T-cell (primary cell): ENCODE measurements at regions of chr2 and their contacts with region 1.

Region 1: DNA sequence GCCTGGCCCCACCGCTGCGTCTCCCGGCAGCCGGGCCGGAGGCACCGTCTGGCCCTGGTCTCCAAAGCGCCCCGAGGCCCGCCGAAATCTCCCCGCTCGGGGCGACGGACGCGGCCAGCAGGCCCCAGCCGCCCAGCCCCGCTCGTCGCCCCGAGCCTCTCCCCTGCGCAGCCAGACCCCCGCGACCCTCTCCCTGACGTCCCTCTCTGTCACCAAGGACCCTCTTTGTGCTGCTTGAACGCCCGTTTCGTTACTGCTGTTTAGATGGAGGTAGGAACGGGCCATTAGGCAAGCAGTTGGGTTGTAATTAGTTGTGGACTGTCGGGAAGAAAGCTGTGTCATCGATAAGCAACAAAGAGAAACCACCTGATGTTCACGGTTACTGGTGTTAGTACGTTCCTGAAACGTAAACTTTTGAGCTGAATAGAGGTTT is 686 bp downstream of the UBXN4 start:
- DNase-seq: peak in 20 of 35 experiments; percentile 1 to 71 (median 18)
- ATAC-seq: peak; percentile 2 to 33 (median 14)
- H3K4me3 ChIP-seq: peak overlapping the region; percentile 86 to 99
- H3K4me3 Mint-ChIP-seq: peak overlapping the region; percentile 91 to 97 (median 97)
- H3K27ac ChIP-seq: peak overlapping the region; percentile 99
- H3K27ac Mint-ChIP-seq: peak overlapping the region; percentile 94 to 98
- H3K4me1 ChIP-seq: peaks cover 12 to 16% of the 10 kb centered on the region in 2 experiments
- H3K4me1 Mint-ChIP-seq: peaks cover 41 to 47% (median 42%) of the 10 kb centered on the region in 3 donors
- H3K27me3 ChIP-seq: no peaks in the 10 kb centered on the region
- H3K27me3 Mint-ChIP-seq: no peaks in the 10 kb centered on the region

Region 2: DNA sequence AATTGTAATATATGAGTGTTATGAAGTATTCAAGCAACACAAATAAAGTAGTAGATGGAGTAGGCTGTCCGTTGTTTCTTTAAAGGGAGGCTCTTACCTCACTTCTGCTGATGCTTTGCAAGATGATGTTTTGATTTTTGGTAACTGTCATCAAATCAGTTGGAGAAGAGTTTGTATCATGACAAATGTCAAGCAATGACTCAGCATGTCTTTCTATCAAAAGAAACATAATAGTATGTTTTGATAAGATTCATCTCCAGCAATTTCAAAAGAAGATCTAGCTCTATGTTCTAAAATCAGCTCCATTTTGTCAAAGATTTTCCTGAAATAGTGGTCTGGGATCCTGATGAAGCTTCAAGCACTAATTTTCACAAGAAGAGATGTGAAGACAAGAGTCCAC is 720.7 kb before region 1 on chr2:
- CTCF ChIA-PET with region 1: no interaction called
- POLR2A ChIA-PET with region 1: interaction called in 1 of 2 experiments, 13 read pairs
- DNase-seq: no peak
- ATAC-seq: no peak
- H3K4me3 ChIP-seq: no peak overlapping the region
- H3K4me3 Mint-ChIP-seq: no peak overlapping the region
- H3K27ac ChIP-seq: no peak overlapping the region
- H3K27ac Mint-ChIP-seq: no peak overlapping the region
- H3K4me1 ChIP-seq: no peaks in the 10 kb centered on the region
- H3K4me1 Mint-ChIP-seq: peaks cover 0 to 6% (median 0%) of the 10 kb centered on the region in 3 donors
- H3K27me3 ChIP-seq: peaks cover 0 to 2% of the 10 kb centered on the region in 2 experiments
- H3K27me3 Mint-ChIP-seq: no peaks in the 10 kb centered on the region

Region 3: GRCh38 chr2:135531231-135532228 is 210.8 kb before region 1 on chr2 and contains the start of gene R3HDM1:
- CTCF ChIA-PET with region 1: interaction called, 3 to 7 read pairs
- POLR2A ChIA-PET with region 1: interaction called in 1 of 2 experiments, 11 read pairs
- DNase-seq: peak; percentile 81 to 99 (median 95)
- ATAC-seq: peak; percentile 82 to 85 (median 83)
- H3K4me3 ChIP-seq: peak within 1 kb of the TSS; percentile 89 to 91
- H3K4me3 Mint-ChIP-seq: no peak within 1 kb of the TSS
- H3K27ac ChIP-seq: peak within 1 kb of the TSS; percentile 91
- H3K27ac Mint-ChIP-seq: peak within 1 kb of the TSS; percentile 41 to 83
- H3K4me1 ChIP-seq: peaks cover 12 to 22% of the 10 kb centered on the region in 2 experiments
- H3K4me1 Mint-ChIP-seq: peaks cover 23 to 30% (median 28%) of the 10 kb centered on the region in 3 donors
- H3K27me3 ChIP-seq: no peaks in the 10 kb centered on the region
- H3K27me3 Mint-ChIP-seq: no peaks in the 10 kb centered on the region
- total RNA-seq, gene R3HDM1: 38.4 to 44.8 (median 41.9) TPM

Region 4: DNA sequence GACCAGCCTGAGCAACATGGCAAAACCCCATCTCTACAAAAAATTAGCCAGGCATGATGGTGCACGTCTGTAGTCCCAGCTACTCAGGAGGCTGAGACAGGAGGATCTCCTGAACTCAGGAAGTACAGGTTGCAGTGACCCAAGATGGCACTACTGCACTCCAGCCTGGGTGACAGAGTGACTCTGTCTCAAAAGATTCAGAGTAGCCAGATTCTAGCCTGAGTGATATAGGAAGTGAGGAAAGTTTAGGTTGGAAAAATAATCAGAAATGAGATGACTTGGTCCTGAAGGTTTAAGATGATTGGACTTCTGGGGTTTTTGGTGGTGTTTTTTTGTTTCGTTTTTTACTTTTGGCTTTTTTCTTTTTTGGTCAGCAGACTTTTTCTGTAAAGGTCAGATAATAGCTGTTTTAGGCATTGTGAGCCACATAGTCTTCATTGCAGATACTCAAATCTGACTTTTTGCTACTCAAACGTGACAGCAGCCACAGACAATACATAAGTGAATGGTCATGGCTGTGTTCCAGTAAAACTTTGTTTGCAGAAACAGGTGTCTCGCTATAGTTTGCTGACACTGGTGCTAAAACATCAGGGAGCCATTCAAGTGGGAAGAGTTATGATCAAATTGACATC is 104.8 kb before region 1 on chr2:
- CTCF ChIA-PET with region 1: no interaction called
- POLR2A ChIA-PET with region 1: no interaction called
- DNase-seq: no peak
- ATAC-seq: no peak
- H3K4me3 ChIP-seq: no peak overlapping the region
- H3K4me3 Mint-ChIP-seq: no peak overlapping the region
- H3K27ac ChIP-seq: no peak overlapping the region
- H3K27ac Mint-ChIP-seq: peak overlapping the region; percentile 10 to 46
- H3K4me1 ChIP-seq: no peaks in the 10 kb centered on the region
- H3K4me1 Mint-ChIP-seq: no peaks in the 10 kb centered on the region
- H3K27me3 ChIP-seq: no peaks in the 10 kb centered on the region
- H3K27me3 Mint-ChIP-seq: no peaks in the 10 kb centered on the region

Region 5: DNA sequence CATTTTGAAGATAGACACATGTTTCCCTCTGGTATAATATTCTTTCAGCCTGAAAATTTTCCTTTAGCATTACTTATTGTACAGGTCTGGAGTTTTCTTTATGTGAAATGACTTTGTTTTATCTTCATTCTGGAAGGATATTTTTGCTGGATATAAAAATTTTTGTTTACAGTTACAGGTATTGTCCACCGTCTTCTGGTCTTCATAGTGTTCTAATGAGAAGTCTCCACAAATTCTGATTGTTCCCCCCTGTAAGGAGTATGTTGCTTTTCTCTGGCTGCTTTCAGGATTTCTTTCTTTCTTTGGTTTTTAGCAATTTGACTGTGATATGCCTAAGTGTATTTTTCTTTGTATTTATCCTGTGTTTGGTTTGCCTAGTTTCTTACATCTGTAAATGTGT is 14.4 kb after region 1 on chr2:
- CTCF ChIA-PET with region 1: interaction called, 4 to 5 read pairs
- POLR2A ChIA-PET with region 1: interaction called, 4 to 10 read pairs
- DNase-seq: no peak
- ATAC-seq: no peak
- H3K4me3 ChIP-seq: no peak overlapping the region
- H3K4me3 Mint-ChIP-seq: no peak overlapping the region
- H3K27ac ChIP-seq: no peak overlapping the region
- H3K27ac Mint-ChIP-seq: no peak overlapping the region
- H3K4me1 ChIP-seq: no peaks in the 10 kb centered on the region
- H3K4me1 Mint-ChIP-seq: peaks cover 0 to 2% (median 1%) of the 10 kb centered on the region in 3 donors
- H3K27me3 ChIP-seq: no peaks in the 10 kb centered on the region
- H3K27me3 Mint-ChIP-seq: no peaks in the 10 kb centered on the region

Region 6: DNA sequence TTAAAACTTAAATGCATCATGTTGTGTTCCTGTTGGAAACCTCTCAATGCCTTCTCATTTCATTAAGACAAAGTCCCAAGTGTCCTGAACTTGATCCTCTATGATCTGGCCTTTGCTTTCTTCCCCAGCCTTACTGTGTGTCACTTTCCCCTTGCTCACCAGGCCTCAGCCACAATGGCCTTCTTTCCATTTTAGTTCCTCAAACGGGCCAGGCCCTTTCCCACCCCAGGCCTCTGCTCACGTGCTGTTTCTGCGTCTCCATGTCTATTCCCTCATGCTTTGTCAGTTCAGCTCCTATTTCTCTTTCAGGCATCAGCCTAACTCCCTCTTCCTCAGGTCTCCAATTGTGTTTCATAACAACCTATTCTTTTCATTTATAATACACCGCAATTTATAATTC is 356.1 kb after region 1 on chr2:
- CTCF ChIA-PET with region 1: no interaction called
- POLR2A ChIA-PET with region 1: no interaction called
- DNase-seq: no peak
- ATAC-seq: no peak
- H3K4me3 ChIP-seq: no peak overlapping the region
- H3K4me3 Mint-ChIP-seq: no peak overlapping the region
- H3K27ac ChIP-seq: no peak overlapping the region
- H3K27ac Mint-ChIP-seq: peak overlapping the region in 1 of 2 donors; percentile 12
- H3K4me1 ChIP-seq: no peaks in the 10 kb centered on the region
- H3K4me1 Mint-ChIP-seq: peaks cover 0 to 10% (median under 1%) of the 10 kb centered on the region in 3 donors
- H3K27me3 ChIP-seq: peaks cover 0 to 2% of the 10 kb centered on the region in 2 experiments
- H3K27me3 Mint-ChIP-seq: no peaks in the 10 kb centered on the region